ENCODE measurements at regions of chr9 and their contacts with region 1.

Region 1: GRCh38 chr9:19184144-19184917 is 46.2 kb upstream of the DENND4C start:
- DNase-seq: peak; percentile 92
- H3K4me3 Mint-ChIP-seq: peak overlapping the region; percentile 47
- H3K27ac Mint-ChIP-seq: peak overlapping the region; percentile 89
- H3K4me1 Mint-ChIP-seq: peaks cover 14% of the 10 kb centered on the region
- H3K27me3 Mint-ChIP-seq: no peaks in the 10 kb centered on the region

Region 2: DNA sequence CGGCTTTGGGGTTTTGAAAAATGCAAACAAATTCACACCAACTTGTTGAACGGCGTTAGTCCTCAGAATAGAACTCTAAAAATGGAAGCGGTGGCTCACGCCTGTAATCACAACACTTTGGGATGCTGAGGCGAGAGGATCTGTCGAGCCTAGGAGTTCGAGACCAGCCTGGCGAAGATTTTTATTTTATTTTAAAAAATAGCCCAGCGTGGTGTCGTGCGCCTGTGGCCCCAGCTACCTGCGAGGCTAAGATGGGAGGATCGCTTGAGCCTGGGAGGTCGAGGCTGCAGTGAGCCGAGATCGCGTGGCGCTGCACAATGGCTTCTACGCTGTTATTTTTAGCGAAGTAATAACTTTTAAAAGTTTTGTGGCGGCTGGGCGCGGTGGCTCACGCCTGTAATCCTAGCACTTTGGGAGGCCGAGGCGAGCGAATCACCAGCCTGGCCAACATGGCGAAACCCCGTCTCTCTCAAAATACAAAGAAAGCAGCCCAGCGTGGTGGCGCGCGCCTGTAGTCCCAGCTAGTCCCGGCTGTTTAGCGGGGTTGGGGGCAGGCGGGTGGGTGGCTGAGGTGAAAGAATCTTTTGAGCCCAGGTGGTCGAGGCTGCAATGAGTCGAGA is 56.3 kb before region 1 on chr9:
- CTCF ChIA-PET with region 1: interaction called, 3 read pairs
- intact Hi-C with region 1: loop called (anchors 1 kb)
- DNase-seq: peak; percentile 45
- H3K4me3 Mint-ChIP-seq: peak overlapping the region; percentile 92
- H3K27ac Mint-ChIP-seq: peak overlapping the region; percentile 91
- H3K4me1 Mint-ChIP-seq: peaks cover 53% of the 10 kb centered on the region
- H3K27me3 Mint-ChIP-seq: no peaks in the 10 kb centered on the region

Region 3: DNA sequence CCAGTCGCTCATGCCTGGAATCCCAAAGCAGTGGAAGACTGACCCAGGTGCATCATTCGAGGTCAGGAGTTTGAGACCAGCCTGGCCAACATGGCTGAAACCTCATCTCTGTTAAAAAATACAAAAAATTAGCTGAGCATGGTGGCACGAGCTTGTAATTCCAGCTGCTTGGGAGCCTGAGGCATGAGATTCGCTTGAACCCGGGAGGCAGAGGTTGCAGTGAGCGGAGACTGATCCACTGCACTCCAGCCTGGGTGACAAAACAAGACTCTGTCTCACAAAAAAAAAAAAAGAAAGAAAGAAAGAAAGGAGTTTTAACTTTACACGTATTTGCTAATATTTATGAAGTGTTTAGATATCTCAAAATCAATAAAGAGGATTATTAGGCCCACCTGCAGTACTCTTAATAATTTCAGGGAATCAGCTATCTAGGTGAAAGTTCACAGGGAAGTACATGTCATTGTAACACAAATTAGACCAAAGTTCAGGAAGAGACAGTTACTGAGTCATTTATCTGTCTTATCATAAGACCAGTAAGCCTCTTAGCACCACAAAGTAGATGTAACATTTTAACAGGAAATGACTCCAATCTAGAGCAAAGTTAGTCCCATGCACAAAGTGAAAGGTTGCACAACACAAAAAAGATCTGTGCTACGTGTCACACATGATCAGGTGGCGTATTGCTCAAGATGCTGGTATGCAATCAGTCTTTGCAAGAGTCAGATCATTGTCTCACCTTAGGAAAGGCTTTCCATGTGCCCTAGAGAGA is 22.9 kb before region 1 on chr9:
- CTCF ChIA-PET with region 1: interaction called, 3 read pairs
- intact Hi-C with region 1: loop called (anchors 1 kb)
- DNase-seq: peak; percentile 87
- H3K4me3 Mint-ChIP-seq: no peak overlapping the region
- H3K27ac Mint-ChIP-seq: peak overlapping the region; percentile 81
- H3K4me1 Mint-ChIP-seq: peaks cover 23% of the 10 kb centered on the region
- H3K27me3 Mint-ChIP-seq: no peaks in the 10 kb centered on the region

Region 4: GRCh38 chr9:19408693-19409400 is 224.5 kb after region 1 on chr9 and contains the start of gene ACER2:
- CTCF ChIA-PET with region 1: no interaction called
- intact Hi-C with region 1: loop called (anchors 1 kb)
- DNase-seq: peak; percentile 94
- H3K4me3 Mint-ChIP-seq: peak within 1 kb of the TSS; percentile 87
- H3K27ac Mint-ChIP-seq: no peak within 1 kb of the TSS
- H3K4me1 Mint-ChIP-seq: peaks cover 14% of the 10 kb centered on the region
- H3K27me3 Mint-ChIP-seq: no peaks in the 10 kb centered on the region
- total RNA-seq, gene ACER2: 2.0 to 2.2 TPM